Mammary epithelial cell (primary cell): ENCODE measurements at regions of chr12 and their contacts with region 1.

Region 1: GRCh38 chr12:58540480-58541299 is 379.6 kb downstream of the LRIG3 start:
- DNase-seq: peak; percentile 62
- H3K4me3 ChIP-seq: no peak overlapping the region
- H3K27ac ChIP-seq: no peak overlapping the region
- H3K4me1 ChIP-seq: peaks cover 27% of the 10 kb centered on the region
- H3K27me3 ChIP-seq: no peaks in the 10 kb centered on the region
- CTCF ChIP-seq: peak; percentile 68 to 90

Region 2: DNA sequence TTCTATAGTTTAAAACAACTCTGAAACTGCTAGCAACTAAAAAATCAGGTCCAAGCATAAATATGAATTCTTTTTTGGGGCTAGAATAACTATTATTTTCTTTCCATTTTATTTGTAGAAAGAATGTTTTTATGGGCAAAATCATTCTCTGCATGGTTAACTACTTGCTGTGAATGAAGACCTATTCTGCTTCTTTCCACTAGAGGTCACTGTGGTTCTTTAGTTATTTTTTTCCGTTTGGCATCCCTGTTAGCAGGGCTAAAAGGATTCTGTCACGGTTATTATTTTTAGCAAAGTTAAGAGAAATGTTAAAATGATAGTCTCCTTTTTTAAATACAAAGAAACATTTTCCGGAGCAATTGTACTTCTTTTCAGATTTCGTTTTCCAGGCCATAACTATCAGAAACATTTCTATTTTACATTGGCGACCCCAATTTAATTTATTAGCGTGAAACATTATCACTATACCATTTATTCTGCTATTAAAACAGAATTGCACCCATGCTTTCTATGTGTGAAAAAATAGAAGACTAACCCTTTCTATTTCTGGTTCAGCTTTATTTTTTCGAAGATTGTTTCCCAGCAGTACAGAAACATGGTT is 194.6 kb before region 1 on chr12:
- CTCF ChIA-PET with region 1: no interaction called
- dilution Hi-C with region 1: no loop called
- in situ Hi-C with region 1: loop called in 1 of 2 experiments (anchors 25 kb)
- intact Hi-C with region 1: loop called (anchors 2 kb)
- DNase-seq: peak; percentile 26
- H3K4me3 ChIP-seq: no peak overlapping the region
- H3K27ac ChIP-seq: no peak overlapping the region
- H3K4me1 ChIP-seq: no peaks in the 10 kb centered on the region
- H3K27me3 ChIP-seq: no peaks in the 10 kb centered on the region
- CTCF ChIP-seq: peak; percentile 73 to 77

Region 3: GRCh38 chr12:58833853-58834252 is 293.2 kb after region 1 on chr12:
- CTCF ChIA-PET with region 1: no interaction called
- dilution Hi-C with region 1: no loop called
- in situ Hi-C with region 1: no loop called
- intact Hi-C with region 1: loop called (anchors 5 kb)
- DNase-seq: no peak
- H3K4me3 ChIP-seq: no peak overlapping the region
- H3K27ac ChIP-seq: no peak overlapping the region
- H3K4me1 ChIP-seq: no peaks in the 10 kb centered on the region
- H3K27me3 ChIP-seq: no peaks in the 10 kb centered on the region
- CTCF ChIP-seq: peak in 1 of 2 donors; percentile 20

Region 4: GRCh38 chr12:59149997-59150642 is 609.4 kb after region 1 on chr12:
- CTCF ChIA-PET with region 1: no interaction called
- dilution Hi-C with region 1: no loop called
- in situ Hi-C with region 1: loop called in 1 of 2 experiments (anchors 10 kb)
- intact Hi-C with region 1: loop called (anchors 1 kb)
- DNase-seq: peak; percentile 68
- H3K4me3 ChIP-seq: no peak overlapping the region
- H3K27ac ChIP-seq: no peak overlapping the region
- H3K4me1 ChIP-seq: no peaks in the 10 kb centered on the region
- H3K27me3 ChIP-seq: no peaks in the 10 kb centered on the region
- CTCF ChIP-seq: peak; percentile 98 to 99